H1 (cell line): ENCODE measurements at regions of chr22 and their contacts with region 1.

Region 1: DNA sequence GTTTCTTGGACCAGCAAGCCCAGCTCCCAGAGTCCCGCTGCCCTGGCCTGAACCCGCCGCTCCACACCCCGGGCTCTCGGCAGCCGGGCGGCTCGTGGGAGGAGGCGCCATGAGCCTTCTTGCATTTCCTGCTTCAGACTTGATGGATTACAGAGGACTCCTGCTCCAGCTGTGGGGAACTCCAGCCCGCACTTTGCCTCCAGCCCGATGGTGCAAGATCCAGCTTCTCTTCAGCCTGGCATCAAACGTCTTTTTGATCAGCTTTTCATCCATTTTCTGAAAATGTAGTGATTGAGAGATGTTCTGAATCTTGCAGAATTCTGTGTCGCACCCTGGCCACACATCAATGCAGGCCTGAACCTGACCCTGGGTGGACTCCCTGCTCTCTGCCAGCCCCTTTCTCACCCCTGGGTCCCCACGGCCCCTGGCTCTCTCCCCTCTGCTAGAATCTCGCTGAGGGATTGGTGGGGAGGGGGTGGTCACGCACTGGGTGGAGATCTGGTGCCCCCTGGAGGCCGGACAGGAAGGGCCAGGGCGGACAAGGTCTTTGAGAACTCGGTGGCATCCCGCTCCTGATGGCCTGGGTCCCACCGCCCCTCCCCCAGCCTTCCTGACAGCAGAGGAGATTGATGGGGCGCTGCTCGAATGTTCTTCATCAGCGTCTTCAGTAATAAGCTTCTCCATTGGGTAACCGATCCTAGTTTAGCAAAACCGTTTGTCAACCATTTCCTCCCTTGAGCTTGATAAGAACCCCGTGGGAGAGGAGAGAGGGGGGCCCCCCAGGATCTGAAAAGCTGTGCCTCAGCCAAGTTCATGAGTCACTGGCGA is 12.1 kb upstream of the NFAM1 start:
- DNase-seq: peak in 1 of 2 experiments; percentile 97
- H3K4me3 ChIP-seq: peak overlapping the region; percentile 26 to 54 (median 38); a peak in 6 of 8 replicates
- H3K27ac ChIP-seq: no peak overlapping the region
- H3K4me1 ChIP-seq: peaks cover 9 to 34% (median 19%) of the 10 kb centered on the region in 4 experiments
- H3K27me3 ChIP-seq: peaks cover 0 to 2% (median 0%) of the 10 kb centered on the region in 4 experiments; a peak in 2 of 7 replicates
- CTCF ChIP-seq: peak; percentile 88 to 91 (median 91)
- EP300 ChIP-seq: peak in 1 of 2 experiments; percentile 36; a peak in 1 of 3 replicates
- POLR2A ChIP-seq: no peak
- RAD21 ChIP-seq: peak; percentile 92 to 94

Region 2: DNA sequence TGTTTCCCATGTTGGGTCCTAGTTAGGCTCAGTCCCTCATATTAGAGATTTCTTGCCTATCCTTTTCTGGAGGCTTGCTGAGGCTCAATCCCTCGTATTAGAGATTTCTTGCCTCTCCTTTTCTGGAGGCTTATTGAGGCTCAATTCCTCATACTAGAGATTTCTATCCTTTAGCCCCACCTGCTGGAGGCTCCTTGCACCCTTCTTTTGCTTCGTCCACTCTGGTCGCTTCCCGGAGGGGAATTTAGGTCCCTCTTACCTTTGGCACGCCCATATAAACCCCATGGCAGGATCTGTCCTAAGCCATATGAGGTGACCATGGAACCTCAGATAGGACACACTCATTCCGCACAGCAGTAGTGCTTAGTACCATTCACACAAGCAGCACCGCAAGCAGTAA is 329.6 kb before region 1 on chr22:
- CTCF ChIA-PET with region 1: interaction called, 33 read pairs
- POLR2A ChIA-PET with region 1: no interaction called
- DNase-seq: peak in 1 of 2 experiments; percentile 80
- H3K4me3 ChIP-seq: no peak overlapping the region
- H3K27ac ChIP-seq: no peak overlapping the region
- H3K4me1 ChIP-seq: peaks cover 0 to 3% (median 1%) of the 10 kb centered on the region in 4 experiments; a peak in 3 of 7 replicates
- H3K27me3 ChIP-seq: peaks cover 0 to 1% (median under 1%) of the 10 kb centered on the region in 4 experiments; a peak in 3 of 7 replicates
- CTCF ChIP-seq: peak; percentile 61 to 77 (median 70)
- EP300 ChIP-seq: no peak
- POLR2A ChIP-seq: no peak
- RAD21 ChIP-seq: peak; percentile 83

Region 3: GRCh38 chr22:42308892-42309468 is 135.3 kb before region 1 on chr22:
- CTCF ChIA-PET with region 1: interaction called, 11 read pairs
- POLR2A ChIA-PET with region 1: no interaction called
- DNase-seq: no peak
- H3K4me3 ChIP-seq: no peak overlapping the region
- H3K27ac ChIP-seq: no peak overlapping the region
- H3K4me1 ChIP-seq: peaks cover 0 to 22% (median 13%) of the 10 kb centered on the region in 4 experiments; a peak in 6 of 7 replicates
- H3K27me3 ChIP-seq: peaks cover 0 to 7% (median 6%) of the 10 kb centered on the region in 4 experiments; a peak in 3 of 7 replicates
- CTCF ChIP-seq: peak; percentile 4 to 25 (median 21); a peak in 2 of 4 replicates
- EP300 ChIP-seq: no peak
- POLR2A ChIP-seq: no peak
- RAD21 ChIP-seq: no peak

Region 4: GRCh38 chr22:42321908-42322561 is 122.3 kb before region 1 on chr22:
- CTCF ChIA-PET with region 1: interaction called, 16 read pairs
- POLR2A ChIA-PET with region 1: no interaction called
- DNase-seq: no peak
- H3K4me3 ChIP-seq: no peak overlapping the region
- H3K27ac ChIP-seq: no peak overlapping the region
- H3K4me1 ChIP-seq: peaks cover 6 to 32% (median 17%) of the 10 kb centered on the region in 4 experiments
- H3K27me3 ChIP-seq: no peaks in the 10 kb centered on the region
- CTCF ChIP-seq: no peak
- EP300 ChIP-seq: no peak
- POLR2A ChIP-seq: no peak
- RAD21 ChIP-seq: no peak

Region 5: DNA sequence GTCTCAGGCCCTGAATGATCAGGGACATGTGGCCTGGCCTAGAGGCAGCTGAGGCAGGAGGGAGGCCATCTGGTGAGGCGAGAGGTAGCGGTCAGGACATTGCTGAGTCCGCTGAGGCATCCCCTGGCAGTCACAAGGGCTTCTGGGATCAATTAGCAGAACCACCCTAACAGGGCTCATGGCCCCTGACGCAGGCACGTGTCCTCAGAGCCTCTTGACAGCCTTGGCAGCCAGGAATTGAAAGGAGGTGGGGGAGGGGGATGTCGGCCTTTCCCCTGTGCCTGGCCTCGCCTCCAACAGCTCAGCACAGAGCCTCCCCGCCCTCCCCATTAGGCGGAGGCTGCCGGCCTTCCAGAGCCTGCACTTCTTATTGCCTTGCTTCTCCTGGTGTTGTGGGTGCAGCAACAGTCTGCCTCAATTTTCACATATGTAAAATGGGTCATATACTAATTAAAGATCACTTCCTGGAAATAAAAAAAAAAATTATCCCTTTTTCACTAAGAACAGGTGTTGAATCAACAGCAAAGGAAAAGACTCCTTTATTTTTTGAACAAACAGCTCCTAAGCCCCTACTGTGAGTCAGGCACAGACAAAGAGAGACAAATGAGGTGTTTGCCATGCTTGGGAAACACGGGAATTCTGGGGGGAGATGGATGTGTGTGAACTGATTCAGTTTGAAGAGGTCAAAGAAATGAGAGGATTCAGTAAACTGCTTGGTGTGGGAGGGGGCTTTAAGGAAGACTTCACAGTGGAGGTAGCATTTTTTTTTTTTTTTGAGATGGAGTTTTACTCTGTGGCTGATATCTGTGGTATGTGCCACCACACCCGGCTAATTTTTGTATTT is 67.4 kb before region 1 on chr22:
- CTCF ChIA-PET with region 1: interaction called, 22 read pairs
- POLR2A ChIA-PET with region 1: no interaction called
- DNase-seq: no peak
- H3K4me3 ChIP-seq: no peak overlapping the region
- H3K27ac ChIP-seq: no peak overlapping the region
- H3K4me1 ChIP-seq: peaks cover 0 to 30% (median 10%) of the 10 kb centered on the region in 4 experiments; a peak in 6 of 7 replicates
- H3K27me3 ChIP-seq: no peaks in the 10 kb centered on the region
- CTCF ChIP-seq: no peak
- EP300 ChIP-seq: no peak
- POLR2A ChIP-seq: no peak
- RAD21 ChIP-seq: no peak; a peak in 1 of 4 replicates

Region 6: GRCh38 chr22:42419243-42419881 is 24.9 kb before region 1 on chr22:
- CTCF ChIA-PET with region 1: interaction called, 15 read pairs
- POLR2A ChIA-PET with region 1: interaction called, 5 read pairs
- DNase-seq: no peak
- H3K4me3 ChIP-seq: no peak overlapping the region
- H3K27ac ChIP-seq: no peak overlapping the region
- H3K4me1 ChIP-seq: peaks cover 0 to 6% (median under 1%) of the 10 kb centered on the region in 4 experiments; a peak in 4 of 7 replicates
- H3K27me3 ChIP-seq: no peaks in the 10 kb centered on the region
- CTCF ChIP-seq: no peak
- EP300 ChIP-seq: no peak
- POLR2A ChIP-seq: no peak
- RAD21 ChIP-seq: no peak

Region 7: GRCh38 chr22:42462016-42462415 is 17.7 kb after region 1 on chr22:
- CTCF ChIA-PET with region 1: interaction called, 16 read pairs
- POLR2A ChIA-PET with region 1: interaction called, 5 read pairs
- DNase-seq: no peak
- H3K4me3 ChIP-seq: no peak overlapping the region
- H3K27ac ChIP-seq: no peak overlapping the region
- H3K4me1 ChIP-seq: peaks cover 4 to 13% (median 8%) of the 10 kb centered on the region in 4 experiments; a peak in 6 of 7 replicates
- H3K27me3 ChIP-seq: no peaks in the 10 kb centered on the region; a peak in 2 of 7 replicates
- CTCF ChIP-seq: no peak
- EP300 ChIP-seq: no peak
- POLR2A ChIP-seq: no peak
- RAD21 ChIP-seq: peak in 1 of 2 experiments; percentile 12; a peak in 1 of 4 replicates

Region 8: GRCh38 chr22:42520663-42521546 is 76.6 kb after region 1 on chr22:
- CTCF ChIA-PET with region 1: no interaction called
- POLR2A ChIA-PET with region 1: no interaction called
- DNase-seq: no peak
- H3K4me3 ChIP-seq: no peak overlapping the region
- H3K27ac ChIP-seq: no peak overlapping the region
- H3K4me1 ChIP-seq: peaks cover 0 to 3% (median 0%) of the 10 kb centered on the region in 4 experiments; a peak in 2 of 7 replicates
- H3K27me3 ChIP-seq: no peaks in the 10 kb centered on the region
- CTCF ChIP-seq: no peak
- EP300 ChIP-seq: no peak
- POLR2A ChIP-seq: no peak
- RAD21 ChIP-seq: no peak